AG04450 (cell line): ENCODE measurements at regions of chr19 and their contacts with region 1.

Region 1: DNA sequence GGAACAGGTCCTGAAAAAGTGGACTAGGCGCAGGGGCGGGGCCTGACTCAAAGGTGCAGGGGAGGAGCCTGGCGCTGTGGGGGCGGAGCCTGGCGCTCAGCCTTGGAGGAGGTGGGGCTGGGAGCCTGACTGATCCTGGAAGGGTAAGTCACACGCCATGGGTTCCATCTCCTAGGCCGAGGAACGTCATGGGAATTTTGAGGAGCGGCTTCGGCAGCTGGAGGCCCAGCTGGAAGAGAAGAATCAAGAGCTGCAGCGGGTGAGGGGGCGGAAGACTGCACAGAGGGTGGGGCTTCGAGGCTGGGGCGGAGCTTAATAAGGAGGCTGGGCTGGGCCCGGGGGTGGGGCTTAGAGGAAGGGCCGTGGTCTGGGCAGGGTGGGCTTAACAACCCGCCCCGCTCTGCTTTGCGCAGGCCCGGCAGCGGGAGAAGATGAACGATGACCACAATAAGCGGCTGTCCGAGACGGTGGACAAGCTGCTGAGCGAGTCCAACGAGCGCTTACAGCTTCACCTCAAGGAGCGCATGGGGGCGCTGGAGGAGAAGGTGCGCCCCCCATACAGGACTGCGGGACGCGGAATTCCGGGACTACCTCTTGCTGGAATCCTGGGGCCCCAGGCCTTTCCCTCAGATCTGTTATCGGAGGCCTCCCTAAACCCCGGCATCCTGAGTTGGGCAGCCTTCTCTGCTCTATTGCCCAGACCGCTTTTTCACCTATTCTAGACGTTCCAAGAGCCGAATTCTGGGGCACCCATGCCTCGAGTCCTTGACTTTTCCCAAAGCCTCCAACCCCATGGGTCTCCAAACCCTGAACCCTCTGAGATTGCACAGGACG is 14.5 kb downstream of the PPFIA3 start:
- DNase-seq: no peak
- H3K4me3 ChIP-seq: peak overlapping the region; percentile 38
- H3K27ac ChIP-seq: peak overlapping the region; percentile 11
- H3K27me3 ChIP-seq: no peaks in the 10 kb centered on the region
- CTCF ChIP-seq: peak; percentile 23

Region 2: GRCh38 chr19:49145573-49146407 is 12.0 kb after region 1 on chr19:
- CTCF ChIA-PET with region 1: interaction called, 12 read pairs
- POLR2A ChIA-PET with region 1: interaction called, 4 read pairs
- DNase-seq: no peak
- H3K4me3 ChIP-seq: peak overlapping the region; percentile 47
- H3K27ac ChIP-seq: no peak overlapping the region
- H3K27me3 ChIP-seq: no peaks in the 10 kb centered on the region
- CTCF ChIP-seq: peak; percentile 82